ENCODE measurements at regions of chr19 and their contacts with region 1.

Region 1: GRCh38 chr19:31214086-31214485 is 135.2 kb downstream of the TSHZ3 start:
- DNase-seq: peak; percentile 86 to 97 (median 92)
- H3K4me3 ChIP-seq: peak overlapping the region; percentile 8 to 10
- H3K4me3 Mint-ChIP-seq: peak overlapping the region; percentile 36 to 84 (median 76)
- H3K27ac ChIP-seq: peak overlapping the region; percentile 25
- H3K27ac Mint-ChIP-seq: peak overlapping the region; percentile 86 to 98 (median 96)
- H3K4me1 ChIP-seq: peaks cover 20% of the 10 kb centered on the region
- H3K4me1 Mint-ChIP-seq: peaks cover 17 to 33% (median 20%) of the 10 kb centered on the region in 4 donors
- H3K27me3 ChIP-seq: no peaks in the 10 kb centered on the region
- H3K27me3 Mint-ChIP-seq: no peaks in the 10 kb centered on the region

Region 2: DNA sequence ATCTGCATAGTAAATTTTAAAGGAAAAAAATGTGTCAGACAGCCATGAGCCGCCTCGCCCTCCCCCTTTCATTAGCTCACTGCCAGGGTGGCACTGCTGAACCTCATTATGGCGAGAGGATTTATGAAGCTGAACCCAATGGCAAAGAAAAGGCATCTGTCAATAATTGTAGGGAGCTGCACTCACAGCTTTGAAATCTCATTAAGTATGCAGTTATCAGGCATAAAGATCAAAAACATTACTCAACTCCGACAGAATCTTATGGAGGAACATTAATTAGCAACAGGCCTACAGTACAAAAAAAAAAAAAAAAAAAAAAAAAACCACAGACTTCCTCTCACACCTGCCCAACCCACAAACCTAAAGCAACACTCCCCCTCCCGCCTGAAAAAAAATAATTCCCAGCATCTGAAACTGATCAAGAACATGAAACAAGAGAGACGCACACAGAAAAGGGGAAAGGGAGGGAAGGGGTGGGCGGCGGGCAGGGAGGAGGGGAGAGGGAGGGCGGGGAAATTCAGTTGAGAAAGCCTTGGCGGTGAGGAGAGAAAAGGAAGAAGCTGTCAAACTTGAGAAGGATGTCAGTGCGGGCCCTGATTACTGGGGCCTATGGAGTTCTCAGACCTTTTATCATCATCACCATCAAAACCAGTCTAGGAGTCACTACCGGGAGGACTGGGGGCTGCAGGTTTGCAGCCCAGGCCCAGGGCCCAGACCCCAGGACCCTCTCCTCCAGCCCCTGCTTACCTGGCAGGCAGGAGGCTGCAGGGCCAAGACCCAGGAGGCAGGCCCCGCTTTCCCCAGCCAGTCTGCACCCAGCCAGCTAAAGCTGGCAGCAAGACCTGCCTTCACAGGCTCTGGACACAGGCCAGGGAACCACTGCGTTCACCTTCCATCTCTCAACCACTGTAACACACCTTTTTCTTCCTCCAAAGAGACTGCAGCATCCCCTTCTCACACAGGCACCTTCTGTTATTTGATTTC is 126.2 kb after region 1 on chr19:
- CTCF ChIA-PET with region 1: interaction called, 3 read pairs
- POLR2A ChIA-PET with region 1: interaction called, 9 read pairs
- intact Hi-C with region 1: loop called (anchors 1 kb)
- DNase-seq: peak; percentile 68 to 79 (median 69)
- H3K4me3 ChIP-seq: peak overlapping the region in 1 of 2 donors; percentile 20
- H3K4me3 Mint-ChIP-seq: peak overlapping the region; percentile 66 to 93 (median 76)
- H3K27ac ChIP-seq: no peak overlapping the region
- H3K27ac Mint-ChIP-seq: peak overlapping the region; percentile 42 to 98 (median 82)
- H3K4me1 ChIP-seq: peaks cover 30% of the 10 kb centered on the region
- H3K4me1 Mint-ChIP-seq: peaks cover 20 to 40% (median 31%) of the 10 kb centered on the region in 4 donors
- H3K27me3 ChIP-seq: peaks cover 6% of the 10 kb centered on the region
- H3K27me3 Mint-ChIP-seq: peaks cover 7 to 10% of the 10 kb centered on the region in 2 donors

Measured in CD4-positive, alpha-beta memory T cell (primary cell).